Right cardiac atrium (tissue), 5 donors: ENCODE measurements at regions of chr17 and their contacts with region 1.

Region 1: DNA sequence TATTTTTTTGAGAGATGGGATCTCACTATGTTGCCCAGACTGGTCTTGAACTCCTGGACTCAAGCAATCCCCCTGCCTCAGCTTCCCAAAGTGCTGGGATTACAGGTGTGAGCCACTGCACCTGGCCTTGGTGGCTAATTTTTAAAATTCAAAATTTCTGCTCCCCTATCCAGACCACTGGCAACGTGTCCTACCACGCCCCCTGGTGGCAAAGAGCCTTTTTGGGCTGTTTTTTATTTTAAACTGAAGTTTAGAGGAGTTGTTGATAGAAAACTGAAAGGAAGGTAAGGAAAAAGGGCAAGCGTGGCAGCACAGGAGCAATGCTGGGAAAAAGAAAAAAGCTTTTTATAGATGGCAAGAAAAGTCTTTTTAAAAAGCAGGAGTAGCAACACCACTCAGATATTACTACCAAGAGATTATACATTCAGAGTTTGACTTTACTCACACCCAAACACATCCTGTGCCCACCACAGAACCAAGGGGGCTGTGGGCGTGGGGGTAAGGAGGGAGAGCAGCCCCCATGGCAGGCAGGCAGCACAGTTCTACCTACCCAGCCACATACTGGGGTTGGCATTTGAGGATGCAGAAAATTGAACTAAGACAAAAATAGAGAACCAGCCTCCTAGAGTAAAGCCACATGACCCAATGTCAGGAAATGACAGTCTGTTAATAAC is 4.2 kb upstream of the MXRA7 start:
- DNase-seq: peak; percentile 69 to 91 (median 83)
- ATAC-seq: no peak
- H3K4me3 ChIP-seq: no peak overlapping the region
- H3K27ac ChIP-seq: no peak overlapping the region
- H3K4me1 ChIP-seq: peaks cover 7% of the 10 kb centered on the region
- H3K27me3 ChIP-seq: no peaks in the 10 kb centered on the region

Region 2: DNA sequence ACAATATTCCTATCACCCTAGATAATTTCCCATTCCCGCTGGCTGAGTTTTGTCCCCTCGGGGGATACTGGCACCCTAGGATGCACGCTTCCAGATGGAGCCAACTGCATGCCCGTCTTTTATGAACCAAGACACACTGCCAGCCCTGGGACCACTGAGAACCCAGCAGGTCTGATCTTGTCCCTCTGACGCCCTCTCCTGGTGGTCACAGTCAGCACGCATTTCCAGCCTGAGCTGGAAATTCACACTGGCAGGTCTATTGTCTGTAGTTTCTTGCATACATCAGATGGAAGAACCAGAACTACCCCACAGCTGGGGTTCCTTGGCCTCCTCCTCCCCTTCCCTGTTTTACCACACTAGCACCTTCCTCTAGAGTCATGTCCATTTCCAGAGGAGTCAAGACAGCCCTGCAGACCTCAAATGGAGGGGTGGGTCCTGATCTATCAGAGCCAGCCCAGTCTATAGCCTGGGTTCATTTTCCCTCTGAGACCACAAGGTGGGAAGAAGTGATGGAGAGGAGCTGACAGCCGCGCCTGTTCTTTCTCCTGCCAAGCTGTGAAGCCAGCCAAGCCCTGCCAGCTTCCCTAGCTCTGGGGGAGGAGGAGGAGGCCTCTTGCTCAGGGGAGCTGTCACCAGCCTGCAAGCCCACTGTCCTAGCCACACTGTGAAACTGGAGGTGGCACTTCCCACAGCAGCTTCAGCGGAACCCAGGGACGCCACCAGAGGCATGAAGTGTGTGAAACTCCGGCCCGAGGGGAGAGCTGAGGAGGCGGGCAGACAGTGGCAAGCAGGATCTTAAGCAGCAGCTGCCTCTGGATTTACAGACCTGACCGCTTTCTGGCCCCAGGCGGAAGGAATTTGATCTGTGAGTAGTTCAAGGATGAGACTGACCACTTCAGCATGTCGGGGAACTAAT is 33.5 kb before region 1 on chr17:
- intact Hi-C with region 1: loop called in 2 of 4 experiments (anchors 5 kb)
- DNase-seq: peak; percentile 77 to 91 (median 85)
- ATAC-seq: peak; percentile 25 to 37
- H3K4me3 ChIP-seq: no peak overlapping the region
- H3K27ac ChIP-seq: peak overlapping the region; percentile 81
- H3K4me1 ChIP-seq: peaks cover 32% of the 10 kb centered on the region
- H3K27me3 ChIP-seq: no peaks in the 10 kb centered on the region

Region 3: GRCh38 chr17:76781056-76781982 is 66.4 kb after region 1 on chr17:
- intact Hi-C with region 1: no loop called
- DNase-seq: no peak
- ATAC-seq: peak in 1 of 2 donors; percentile 13
- H3K4me3 ChIP-seq: no peak overlapping the region
- H3K27ac ChIP-seq: no peak overlapping the region
- H3K4me1 ChIP-seq: no peaks in the 10 kb centered on the region
- H3K27me3 ChIP-seq: no peaks in the 10 kb centered on the region